WTC11 (cell line): ENCODE measurements at regions of chr5 and their contacts with region 1.

Region 1: GRCh38 chr5:141811287-141812155 is 66.7 kb downstream of the PCDH1 start:
- DNase-seq: peak; percentile 80
- ATAC-seq: peak; percentile 62
- H3K4me3 Mint-ChIP-seq: peak overlapping the region; percentile 61
- H3K27ac Mint-ChIP-seq: peak overlapping the region; percentile 61; the same call in 1 of the 2 replicates
- H3K4me1 Mint-ChIP-seq: peaks cover 85% of the 10 kb centered on the region
- H3K27me3 Mint-ChIP-seq: peaks cover 2% of the 10 kb centered on the region; the same call in 1 of the 2 replicates
- CTCF ChIP-seq: peak; percentile 67

Region 2: GRCh38 chr5:141691867-141692532 is 119.5 kb before region 1 on chr5:
- CTCF ChIA-PET with region 1: interaction called, 46 read pairs
- POLR2A ChIA-PET with region 1: no interaction called
- DNase-seq: peak; percentile 93
- ATAC-seq: peak; percentile 72
- H3K4me3 Mint-ChIP-seq: peak overlapping the region; percentile 69
- H3K27ac Mint-ChIP-seq: no peak overlapping the region
- H3K4me1 Mint-ChIP-seq: peaks cover 30% of the 10 kb centered on the region
- H3K27me3 Mint-ChIP-seq: peaks cover 10% of the 10 kb centered on the region
- CTCF ChIP-seq: peak; percentile 99

Region 3: GRCh38 chr5:141713616-141714309 is 97.8 kb before region 1 on chr5:
- CTCF ChIA-PET with region 1: interaction called, 16 read pairs
- POLR2A ChIA-PET with region 1: no interaction called
- DNase-seq: no peak
- ATAC-seq: no peak
- H3K4me3 Mint-ChIP-seq: no peak overlapping the region
- H3K27ac Mint-ChIP-seq: no peak overlapping the region
- H3K4me1 Mint-ChIP-seq: peaks cover 47% of the 10 kb centered on the region
- H3K27me3 Mint-ChIP-seq: no peaks in the 10 kb centered on the region
- CTCF ChIP-seq: no peak

Region 4: GRCh38 chr5:141771031-141771430 is 40.5 kb before region 1 on chr5:
- CTCF ChIA-PET with region 1: interaction called, 12 read pairs
- POLR2A ChIA-PET with region 1: interaction called, 4 read pairs
- DNase-seq: no peak
- ATAC-seq: 0 out of 2 replicates have a peak, but pooled peaks have one; percentile 13
- H3K4me3 Mint-ChIP-seq: no peak overlapping the region
- H3K27ac Mint-ChIP-seq: no peak overlapping the region
- H3K4me1 Mint-ChIP-seq: peaks cover 20% of the 10 kb centered on the region
- H3K27me3 Mint-ChIP-seq: peaks cover 2% of the 10 kb centered on the region; the same call in 1 of the 2 replicates
- CTCF ChIP-seq: no peak

Region 5: GRCh38 chr5:141793881-141794280 is 17.6 kb before region 1 on chr5:
- CTCF ChIA-PET with region 1: interaction called, 46 read pairs
- POLR2A ChIA-PET with region 1: interaction called, 4 read pairs
- DNase-seq: no peak
- ATAC-seq: no peak; the same call in 1 of the 2 replicates
- H3K4me3 Mint-ChIP-seq: no peak overlapping the region
- H3K27ac Mint-ChIP-seq: no peak overlapping the region
- H3K4me1 Mint-ChIP-seq: peaks cover 30% of the 10 kb centered on the region
- H3K27me3 Mint-ChIP-seq: no peaks in the 10 kb centered on the region
- CTCF ChIP-seq: no peak

Region 6: GRCh38 chr5:141849375-141850243 is 38.1 kb after region 1 on chr5:
- CTCF ChIA-PET with region 1: interaction called, 43 read pairs
- POLR2A ChIA-PET with region 1: interaction called, 31 read pairs
- DNase-seq: peak; percentile 94
- ATAC-seq: peak; percentile 47
- H3K4me3 Mint-ChIP-seq: peak overlapping the region; percentile 73
- H3K27ac Mint-ChIP-seq: peak overlapping the region; percentile 99
- H3K4me1 Mint-ChIP-seq: peaks cover 68% of the 10 kb centered on the region
- H3K27me3 Mint-ChIP-seq: no peaks in the 10 kb centered on the region
- CTCF ChIP-seq: no peak

Region 7: DNA sequence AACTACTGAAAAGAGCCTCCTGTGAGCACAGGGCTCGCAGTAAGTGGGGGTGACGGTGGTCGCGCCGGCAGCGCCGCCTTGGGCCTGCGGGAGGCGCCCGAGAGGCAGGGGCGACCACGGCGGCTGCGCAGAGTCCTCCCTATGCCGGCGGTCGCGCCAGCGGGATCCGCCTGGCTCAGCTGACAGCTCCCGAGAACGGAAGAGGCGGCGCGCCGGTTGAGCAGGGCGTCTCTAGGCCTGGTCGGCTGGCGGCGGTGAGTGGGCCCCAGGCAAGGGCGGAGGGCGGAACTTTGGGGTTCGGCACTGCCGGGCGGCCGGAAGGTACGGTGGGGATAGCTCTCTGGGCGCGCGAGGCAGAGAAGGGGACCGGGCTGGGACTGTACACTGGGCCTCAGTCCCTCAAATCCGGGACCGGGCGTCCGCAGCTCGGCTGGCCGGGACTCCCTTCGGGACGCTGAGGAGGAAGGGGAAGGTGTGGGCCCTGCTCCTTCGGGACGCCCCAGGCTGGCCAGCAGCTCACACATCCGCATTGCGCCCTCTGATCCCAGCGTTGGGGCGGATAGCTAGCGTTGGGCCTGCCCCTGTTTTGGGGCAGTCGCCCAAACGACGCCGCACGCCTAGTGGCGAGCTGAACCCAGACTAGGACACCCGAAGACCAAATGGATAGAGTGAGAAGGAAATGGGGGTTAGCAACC is 157.5 kb after region 1 on chr5 and contains the start of gene RNF14:
- CTCF ChIA-PET with region 1: interaction called, 16 read pairs
- POLR2A ChIA-PET with region 1: interaction called, 4 read pairs
- DNase-seq: peak; percentile 95
- ATAC-seq: peak; percentile 96
- H3K4me3 Mint-ChIP-seq: peak within 1 kb of the TSS; percentile 80
- H3K27ac Mint-ChIP-seq: peak within 1 kb of the TSS; percentile 92
- H3K4me1 Mint-ChIP-seq: peaks cover 19% of the 10 kb centered on the region
- H3K27me3 Mint-ChIP-seq: no peaks in the 10 kb centered on the region
- CTCF ChIP-seq: peak; percentile 98
- total RNA-seq, gene RNF14: 17.0 to 22.6 TPM (median 20.5 TPM) in 3 replicates